Heart right ventricle (tissue), 16 donors: ENCODE measurements at regions of chr3 and their contacts with region 1.

Region 1: GRCh38 chr3:189720736-189721417 is 89.7 kb downstream of the TP63 start:
- DNase-seq: no peak
- ATAC-seq: no peak
- H3K4me3 ChIP-seq: no peak overlapping the region
- H3K27ac ChIP-seq: no peak overlapping the region
- H3K4me1 ChIP-seq: no peaks in the 10 kb centered on the region
- H3K27me3 ChIP-seq: no peaks in the 10 kb centered on the region
- CTCF ChIP-seq: no peak

Region 2: GRCh38 chr3:189756220-189757078 is 35.6 kb after region 1 on chr3:
- intact Hi-C with region 1: loop called in 1 of 10 experiments (anchors 1 kb)
- DNase-seq: no peak
- ATAC-seq: no peak
- H3K4me3 ChIP-seq: no peak overlapping the region
- H3K27ac ChIP-seq: no peak overlapping the region
- H3K4me1 ChIP-seq: no peaks in the 10 kb centered on the region
- H3K27me3 ChIP-seq: no peaks in the 10 kb centered on the region
- CTCF ChIP-seq: no peak

Region 3: GRCh38 chr3:190321789-190322603 is 601.1 kb after region 1 on chr3 and contains the start of gene CLDN1:
- intact Hi-C with region 1: no loop called
- DNase-seq: peak; percentile 72 to 81
- ATAC-seq: peak; percentile 89 to 96 (median 94)
- H3K4me3 ChIP-seq: peak within 1 kb of the TSS; percentile 38 to 68 (median 58)
- H3K27ac ChIP-seq: no peak within 1 kb of the TSS
- H3K4me1 ChIP-seq: peaks cover 0 to 25% (median 12%) of the 10 kb centered on the region in 9 donors
- H3K27me3 ChIP-seq: peaks cover 0 to 33% (median 13%) of the 10 kb centered on the region in 7 donors
- CTCF ChIP-seq: peak in 8 of 9 donors; percentile 91 to 99 (median 96)
- total RNA-seq, gene CLDN1: 0.10 to 0.78 (median 0.17) TPM in 8 of 10 donors, not detected in the others